H1 (cell line): ENCODE measurements at regions of chr16 and their contacts with region 1.

Region 1: GRCh38 chr16:2155091-2156021 is at the start of gene TRAF7:
- DNase-seq: peak; percentile 99
- H3K4me3 ChIP-seq: peak within 1 kb of the TSS; percentile 93 to 100 (median 98)
- H3K27ac ChIP-seq: peak within 1 kb of the TSS; percentile 83
- H3K4me1 ChIP-seq: peaks cover 0 to 52% (median 34%) of the 10 kb centered on the region in 4 experiments; a peak in 6 of 7 replicates
- H3K27me3 ChIP-seq: no peaks in the 10 kb centered on the region
- CTCF ChIP-seq: no peak; a peak in 1 of 4 replicates
- EP300 ChIP-seq: no peak
- POLR2A ChIP-seq: peak in 1 of 2 experiments; percentile 100; a peak in 2 of 3 replicates
- RAD21 ChIP-seq: no peak
- total RNA-seq, gene TRAF7: 148 and 155 TPM in 2 replicates

Region 2: GRCh38 chr16:1959269-1960049 is 195.9 kb before region 1 on chr16 and contains the start of gene NDUFB10:
- CTCF ChIA-PET with region 1: no interaction called
- POLR2A ChIA-PET with region 1: interaction called, 14 read pairs
- DNase-seq: peak; percentile 76 to 96
- H3K4me3 ChIP-seq: peak within 1 kb of the TSS; percentile 78 to 93 (median 86)
- H3K27ac ChIP-seq: peak within 1 kb of the TSS; percentile 55
- H3K4me1 ChIP-seq: peaks cover 0 to 16% (median under 1%) of the 10 kb centered on the region in 4 experiments; a peak in 4 of 7 replicates
- H3K27me3 ChIP-seq: peaks cover 0 to 2% (median 0%) of the 10 kb centered on the region in 4 experiments; a peak in 3 of 7 replicates
- CTCF ChIP-seq: peak in 1 of 3 experiments; percentile 35; a peak in 1 of 4 replicates
- EP300 ChIP-seq: no peak
- POLR2A ChIP-seq: peak in 1 of 2 experiments; percentile 91; a peak in 2 of 3 replicates
- RAD21 ChIP-seq: no peak
- total RNA-seq, gene NDUFB10: 183 and 197 TPM in 2 replicates

Region 3: GRCh38 chr16:1991948-1992703 is 163.2 kb before region 1 on chr16:
- CTCF ChIA-PET with region 1: interaction called, 3 read pairs
- POLR2A ChIA-PET with region 1: interaction called, 11 read pairs
- DNase-seq: peak; percentile 85 to 98
- H3K4me3 ChIP-seq: peak overlapping the region; percentile 46 to 82 (median 48)
- H3K27ac ChIP-seq: peak overlapping the region; percentile 81; the same call in 1 of the 2 replicates
- H3K4me1 ChIP-seq: peaks cover 0 to 24% (median 18%) of the 10 kb centered on the region in 4 experiments; a peak in 6 of 7 replicates
- H3K27me3 ChIP-seq: peaks cover 4 to 37% (median 24%) of the 10 kb centered on the region in 4 experiments
- CTCF ChIP-seq: no peak
- EP300 ChIP-seq: no peak
- POLR2A ChIP-seq: peak in 1 of 2 experiments; percentile 88; a peak in 2 of 3 replicates
- RAD21 ChIP-seq: no peak

Region 4: GRCh38 chr16:2009789-2010510 is 145.4 kb before region 1 on chr16 and contains the start of gene ZNF598:
- CTCF ChIA-PET with region 1: interaction called, 17 read pairs
- POLR2A ChIA-PET with region 1: interaction called, 36 read pairs
- DNase-seq: peak in 1 of 2 experiments; percentile 82
- H3K4me3 ChIP-seq: peak within 1 kb of the TSS; percentile 66 to 95 (median 83)
- H3K27ac ChIP-seq: peak within 1 kb of the TSS; percentile 61
- H3K4me1 ChIP-seq: peaks cover 3 to 26% (median 15%) of the 10 kb centered on the region in 4 experiments
- H3K27me3 ChIP-seq: no peaks in the 10 kb centered on the region
- CTCF ChIP-seq: no peak
- EP300 ChIP-seq: no peak
- POLR2A ChIP-seq: peak in 1 of 2 experiments; percentile 80; a peak in 2 of 3 replicates
- RAD21 ChIP-seq: no peak
- total RNA-seq, gene ZNF598: 47.6 and 51.7 TPM in 2 replicates

Region 5: DNA sequence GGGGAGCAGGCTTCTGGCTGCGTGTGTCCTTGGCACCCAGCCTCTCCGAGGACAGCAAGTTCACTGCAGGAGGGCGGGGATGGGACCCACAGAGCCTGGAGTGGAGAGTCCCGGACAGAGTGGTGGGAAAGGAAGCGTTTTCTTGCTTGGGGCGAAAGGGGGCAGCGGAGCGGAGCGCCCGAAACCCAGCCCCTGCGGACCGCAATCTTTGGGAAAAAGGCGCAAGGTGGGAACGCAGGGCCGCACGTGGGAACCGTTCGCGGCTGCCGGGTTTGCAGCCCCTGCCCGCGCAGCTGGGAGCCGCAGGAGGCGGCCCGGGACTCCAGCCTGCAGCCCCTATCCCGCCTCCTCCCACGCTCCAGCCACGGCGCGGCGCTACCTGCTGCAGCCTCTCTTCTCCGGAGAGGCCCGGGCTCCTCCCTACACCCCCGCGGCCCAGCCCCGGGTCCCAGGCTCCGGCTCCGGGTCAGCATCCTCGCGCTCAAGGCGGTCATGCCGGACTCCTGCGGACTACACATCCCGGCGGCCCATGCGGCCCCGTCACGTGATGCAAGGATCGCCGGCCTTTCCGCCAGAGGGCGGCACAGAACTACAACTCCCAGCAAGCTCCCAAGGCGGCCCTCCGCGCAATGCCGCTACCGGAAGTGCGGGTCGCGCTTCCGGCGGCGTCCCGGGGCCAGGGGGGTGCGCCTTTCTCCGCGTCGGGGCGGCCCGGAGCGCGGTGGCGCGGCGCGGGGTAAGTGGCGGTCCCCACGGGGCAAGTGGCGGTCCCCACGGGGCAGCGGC is 107.8 kb before region 1 on chr16 and contains the starts of genes NTHL1 and TSC2:
- CTCF ChIA-PET with region 1: interaction called, 5 read pairs
- POLR2A ChIA-PET with region 1: interaction called, 38 read pairs
- DNase-seq: peak; percentile 90 to 97
- H3K4me3 ChIP-seq: peak within 1 kb of the TSS; percentile 42 to 89 (median 86)
- H3K27ac ChIP-seq: no peak within 1 kb of the TSS
- H3K4me1 ChIP-seq: peaks cover 0 to 3% (median 1%) of the 10 kb centered on the region in 4 experiments; a peak in 3 of 7 replicates
- H3K27me3 ChIP-seq: no peaks in the 10 kb centered on the region; a peak in 1 of 7 replicates
- CTCF ChIP-seq: peak in 1 of 3 experiments; percentile 15; a peak in 1 of 4 replicates
- EP300 ChIP-seq: no peak
- POLR2A ChIP-seq: no peak
- RAD21 ChIP-seq: no peak; a peak in 1 of 4 replicates
- total RNA-seq, gene NTHL1: 70.9 and 84.5 TPM in 2 replicates
- total RNA-seq, gene TSC2: 91.1 and 96.6 TPM in 2 replicates

Region 6: DNA sequence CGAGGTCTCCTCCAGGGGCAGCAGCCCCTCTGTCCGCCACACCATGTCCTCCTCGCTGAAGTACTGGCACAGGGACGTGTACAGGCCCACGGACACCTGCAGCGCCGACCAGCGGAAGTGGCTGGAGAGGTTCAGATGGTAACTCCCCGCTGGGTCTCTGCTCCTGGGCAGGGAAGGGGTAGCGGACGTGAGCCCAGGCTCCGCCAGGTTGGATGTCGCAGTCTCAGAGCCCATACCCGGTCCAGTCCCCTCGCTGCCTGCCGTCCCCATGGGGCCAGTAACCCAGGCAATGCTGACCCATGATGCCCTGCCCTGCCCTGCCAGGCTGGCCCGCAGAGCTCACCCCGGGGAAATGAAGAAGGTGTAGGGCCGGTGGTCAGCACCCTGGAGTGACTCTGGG is 52.9 kb before region 1 on chr16:
- CTCF ChIA-PET with region 1: no interaction called
- POLR2A ChIA-PET with region 1: no interaction called
- DNase-seq: no peak
- H3K4me3 ChIP-seq: no peak overlapping the region
- H3K27ac ChIP-seq: no peak overlapping the region
- H3K4me1 ChIP-seq: no peaks in the 10 kb centered on the region
- H3K27me3 ChIP-seq: no peaks in the 10 kb centered on the region
- CTCF ChIP-seq: no peak
- EP300 ChIP-seq: no peak
- POLR2A ChIP-seq: no peak
- RAD21 ChIP-seq: no peak

Region 7: GRCh38 chr16:2178321-2179106 is 23.2 kb after region 1 on chr16:
- CTCF ChIA-PET with region 1: interaction called, 3 read pairs
- POLR2A ChIA-PET with region 1: interaction called, 312 read pairs
- DNase-seq: peak; percentile 62 to 95
- H3K4me3 ChIP-seq: peak overlapping the region in 1 of 4 experiments; percentile 43; a peak in 3 of 8 replicates
- H3K27ac ChIP-seq: no peak overlapping the region
- H3K4me1 ChIP-seq: peaks cover 0 to 7% (median 2%) of the 10 kb centered on the region in 4 experiments; a peak in 4 of 7 replicates
- H3K27me3 ChIP-seq: no peaks in the 10 kb centered on the region; a peak in 1 of 7 replicates
- CTCF ChIP-seq: no peak
- EP300 ChIP-seq: no peak
- POLR2A ChIP-seq: peak in 1 of 2 experiments; percentile 58; a peak in 1 of 3 replicates
- RAD21 ChIP-seq: no peak

Region 8: DNA sequence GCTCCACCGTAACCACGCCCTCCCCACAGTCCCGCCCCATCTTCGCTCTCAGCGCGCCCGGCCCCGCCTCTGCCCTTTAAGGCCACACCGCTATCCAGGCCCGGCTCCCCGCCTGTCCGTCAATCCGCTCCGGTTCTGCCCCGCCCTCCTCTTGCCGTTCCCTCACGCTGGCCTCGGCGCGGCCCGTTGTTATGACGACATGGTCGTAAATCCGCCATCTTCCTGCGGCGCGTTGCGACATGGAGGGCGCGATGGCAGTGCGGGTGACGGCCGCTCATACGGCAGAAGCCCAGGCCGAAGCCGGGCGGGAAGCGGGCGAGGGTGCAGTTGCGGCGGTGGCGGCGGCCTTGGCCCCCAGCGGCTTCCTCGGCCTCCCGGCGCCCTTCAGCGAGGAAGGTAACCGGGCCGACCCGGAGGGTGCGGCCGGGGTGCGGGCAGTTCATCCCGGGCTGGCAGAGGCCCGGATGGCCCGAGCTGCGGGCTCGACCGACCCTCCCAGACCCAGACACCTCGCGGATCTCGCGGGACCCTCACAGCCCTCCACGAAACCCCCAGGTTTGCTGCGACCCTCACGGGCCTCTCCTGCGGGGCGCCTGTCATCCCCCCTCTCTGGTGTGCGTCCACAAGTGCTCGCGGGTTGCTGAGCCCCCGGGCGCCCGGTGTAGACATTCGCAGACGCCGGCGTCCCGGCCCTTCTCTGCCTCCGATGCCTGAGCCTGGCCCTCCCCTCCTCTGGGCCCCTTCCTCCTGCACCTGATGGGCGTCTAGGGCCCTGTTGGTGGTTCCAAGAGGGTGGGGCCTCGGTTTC is 68.2 kb after region 1 on chr16 and contains the start of gene E4F1:
- CTCF ChIA-PET with region 1: no interaction called
- POLR2A ChIA-PET with region 1: interaction called, 11 read pairs
- DNase-seq: peak; percentile 99 to 100
- H3K4me3 ChIP-seq: peak within 1 kb of the TSS; percentile 67 to 93 (median 80)
- H3K27ac ChIP-seq: peak within 1 kb of the TSS; percentile 77
- H3K4me1 ChIP-seq: no peaks in the 10 kb centered on the region
- H3K27me3 ChIP-seq: no peaks in the 10 kb centered on the region
- CTCF ChIP-seq: peak in 1 of 3 experiments; percentile 14; a peak in 1 of 4 replicates
- EP300 ChIP-seq: peak in 1 of 2 experiments; percentile 48; a peak in 1 of 3 replicates
- POLR2A ChIP-seq: peak in 1 of 2 experiments; percentile 99; a peak in 2 of 3 replicates
- RAD21 ChIP-seq: no peak
- total RNA-seq, gene E4F1: 21.9 and 22.2 TPM in 2 replicates